ENCODE measurements at regions of chr2 and their contacts with region 1.

Region 1: DNA sequence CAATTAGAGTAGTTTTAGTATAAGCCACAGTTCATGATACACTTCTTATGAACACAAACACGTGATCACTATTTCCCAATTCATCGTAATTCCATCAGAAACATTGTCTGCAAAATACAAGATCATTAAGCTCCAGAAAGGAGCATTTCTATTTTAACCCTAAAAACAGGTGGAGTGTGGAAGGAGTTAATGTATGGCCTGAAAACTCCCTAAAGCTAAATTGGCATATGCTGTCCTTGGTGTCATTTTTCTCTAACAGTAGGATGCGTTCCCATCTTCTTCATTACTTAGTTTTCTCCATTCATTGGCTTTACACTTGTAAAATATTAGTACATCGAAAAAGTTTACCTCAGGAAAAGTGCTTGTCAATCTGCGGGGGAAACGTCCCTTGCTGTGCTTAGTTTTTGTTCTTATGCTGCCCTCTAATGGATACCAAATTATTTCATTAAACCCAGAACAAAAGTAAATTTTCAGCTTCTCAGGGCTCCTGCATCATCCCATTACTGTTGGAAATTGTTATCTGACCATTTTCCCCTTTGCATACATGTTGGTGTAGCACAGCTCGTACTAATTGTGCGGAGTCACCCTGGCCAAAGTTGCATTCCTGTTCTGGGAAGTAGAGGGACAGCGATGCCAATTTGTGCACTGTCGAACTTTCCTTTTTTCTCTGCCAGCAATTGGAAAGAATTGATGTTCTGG is 153.4 kb downstream of the GPD2 start:
- DNase-seq: no peak
- H3K4me3 Mint-ChIP-seq: no peak overlapping the region
- H3K27ac Mint-ChIP-seq: no peak overlapping the region
- H3K4me1 Mint-ChIP-seq: peaks cover 16% of the 10 kb centered on the region
- H3K27me3 Mint-ChIP-seq: no peaks in the 10 kb centered on the region

Region 2: DNA sequence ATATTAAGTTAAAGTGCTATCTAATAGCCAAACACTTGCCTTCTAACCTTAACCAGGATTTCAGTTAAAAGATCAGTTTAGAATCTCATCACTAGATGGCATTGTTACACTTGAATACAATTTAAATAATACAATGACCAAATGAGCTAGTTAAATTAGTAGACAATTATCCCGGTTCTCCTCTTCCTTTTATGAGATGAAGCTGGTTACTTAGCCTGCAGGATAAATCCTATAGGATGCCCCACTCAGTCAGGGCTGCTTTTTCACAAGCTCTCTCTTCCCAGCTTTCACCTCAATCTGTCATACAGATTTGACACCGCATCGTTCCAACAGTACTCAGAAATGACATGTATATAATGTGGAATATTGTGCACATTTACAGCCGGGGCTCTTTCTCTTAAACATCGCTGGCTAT is 1212.3 kb before region 1 on chr2:
- intact Hi-C with region 1: loop called (anchors 1 kb)
- DNase-seq: no peak
- H3K4me3 Mint-ChIP-seq: no peak overlapping the region
- H3K27ac Mint-ChIP-seq: no peak overlapping the region
- H3K4me1 Mint-ChIP-seq: peaks cover 10% of the 10 kb centered on the region
- H3K27me3 Mint-ChIP-seq: peaks cover 5% of the 10 kb centered on the region

Region 3: GRCh38 chr2:156192468-156192867 is 397.1 kb before region 1 on chr2:
- intact Hi-C with region 1: loop called (anchors 5 kb)
- DNase-seq: no peak
- H3K4me3 Mint-ChIP-seq: no peak overlapping the region
- H3K27ac Mint-ChIP-seq: no peak overlapping the region
- H3K4me1 Mint-ChIP-seq: no peaks in the 10 kb centered on the region
- H3K27me3 Mint-ChIP-seq: no peaks in the 10 kb centered on the region

Region 4: GRCh38 chr2:156219491-156220100 is 369.9 kb before region 1 on chr2:
- intact Hi-C with region 1: no loop called
- DNase-seq: no peak
- H3K4me3 Mint-ChIP-seq: no peak overlapping the region
- H3K27ac Mint-ChIP-seq: no peak overlapping the region
- H3K4me1 Mint-ChIP-seq: no peaks in the 10 kb centered on the region
- H3K27me3 Mint-ChIP-seq: no peaks in the 10 kb centered on the region

Region 5: GRCh38 chr2:156435715-156436496 is 153.6 kb before region 1 on chr2 and contains the start of gene GPD2:
- intact Hi-C with region 1: loop called (anchors 2 kb)
- DNase-seq: peak; percentile 56
- H3K4me3 Mint-ChIP-seq: peak within 1 kb of the TSS; percentile 92
- H3K27ac Mint-ChIP-seq: peak within 1 kb of the TSS; percentile 98
- H3K4me1 Mint-ChIP-seq: peaks cover 34% of the 10 kb centered on the region
- H3K27me3 Mint-ChIP-seq: peaks cover 2% of the 10 kb centered on the region
- total RNA-seq, gene GPD2: 15.7 and 18.1 TPM in 2 replicates

Region 6: DNA sequence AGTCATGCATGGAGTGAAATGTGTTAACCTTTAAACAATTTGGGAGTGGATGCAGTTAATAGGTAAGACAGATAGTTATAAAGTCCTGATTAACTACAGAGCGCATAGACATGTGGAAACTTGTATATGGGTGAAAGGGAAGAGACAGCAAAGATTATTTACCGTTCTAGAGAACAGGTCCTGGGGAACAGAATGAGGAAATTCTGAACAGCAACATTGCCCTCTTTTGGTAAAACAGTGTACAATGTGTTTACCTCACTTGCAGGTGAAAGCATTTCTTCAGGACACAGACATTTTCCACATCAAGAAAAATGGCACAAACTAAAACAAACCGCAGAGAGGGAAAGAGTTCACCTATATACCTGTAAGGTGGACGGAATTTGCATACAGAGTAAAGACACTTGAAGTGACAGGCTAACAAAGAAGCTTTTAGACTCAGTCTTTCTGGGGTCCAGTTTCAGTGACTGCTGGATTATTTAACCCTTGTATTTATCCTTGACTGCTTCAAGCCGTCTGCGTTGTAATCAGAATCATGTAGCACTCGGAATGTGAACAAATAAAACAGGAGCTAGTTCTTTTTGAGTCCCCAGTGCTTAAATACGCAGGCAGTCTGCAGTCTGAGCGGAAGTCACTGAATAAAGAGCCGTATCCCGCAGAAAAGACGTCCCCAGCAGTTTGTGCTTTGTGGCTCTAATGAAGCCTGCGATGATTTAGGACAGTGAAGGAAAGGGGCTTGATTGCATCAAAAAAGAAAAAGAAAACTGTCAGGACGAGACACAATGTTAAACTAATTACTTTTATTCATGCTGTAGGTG is 303.1 kb after region 1 on chr2:
- intact Hi-C with region 1: loop called (anchors 5 kb)
- DNase-seq: no peak
- H3K4me3 Mint-ChIP-seq: no peak overlapping the region
- H3K27ac Mint-ChIP-seq: no peak overlapping the region
- H3K4me1 Mint-ChIP-seq: peaks cover 43% of the 10 kb centered on the region
- H3K27me3 Mint-ChIP-seq: peaks cover 53% of the 10 kb centered on the region

Measured in activated T-helper 1 cell treated with anti-CD3 and anti-CD28 coated beads, Interleukin-12 subunit alpha, Interleukin-12 subunit beta, Interleukin-2, Interleukin-4 antibody, amounts not matched to agents 30 ng/mL and 10 ng/mL and 1 ng/mL, durations not matched to agents 14 hours and 24 hours and 36 hours (primary cell).